Activated B cell treated with CpG ODN at 0.5 μM for 24 hours (primary cell): ENCODE measurements at regions of chr4 and their contacts with region 1.

Region 1: DNA sequence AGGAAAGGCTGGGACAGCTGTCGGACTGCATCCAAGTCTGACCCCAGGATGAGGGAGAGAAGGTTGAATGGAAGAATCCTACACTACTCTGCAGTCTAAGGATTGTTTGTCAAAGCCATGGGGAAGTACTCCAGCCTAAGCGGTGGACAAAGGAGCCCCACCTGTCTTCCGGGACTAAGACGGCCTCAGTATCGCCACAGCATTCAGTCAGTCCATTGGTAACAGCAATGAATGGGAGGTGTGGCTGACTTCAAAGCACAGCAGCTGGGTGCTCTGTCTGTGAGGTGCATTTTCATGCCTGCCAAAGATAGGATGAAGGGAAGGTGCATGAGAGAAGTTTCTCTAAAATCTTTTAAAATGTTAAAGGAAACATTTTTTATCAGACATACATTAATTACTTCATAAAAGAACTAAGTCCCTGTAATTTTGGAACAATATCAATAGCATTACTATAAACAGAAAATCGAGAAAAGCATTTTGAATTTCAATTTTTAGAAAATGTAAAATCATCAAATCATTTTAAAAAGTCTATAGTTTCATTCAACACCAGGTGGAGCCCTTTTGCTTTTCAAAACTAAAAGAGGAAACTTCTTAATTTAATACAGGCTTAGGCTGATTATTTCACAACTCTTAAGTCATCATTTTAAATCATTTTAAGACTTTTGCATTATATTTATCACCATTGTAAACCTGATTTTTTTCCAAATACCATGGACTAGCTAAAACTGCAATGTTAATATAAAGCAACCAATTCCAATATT is 27.6 kb upstream of the INTU start:
- DNase-seq: no peak
- ATAC-seq: no peak
- H3K4me3 Mint-ChIP-seq: no peak overlapping the region
- H3K27ac Mint-ChIP-seq: no peak overlapping the region
- H3K4me1 Mint-ChIP-seq: no peaks in the 10 kb centered on the region
- H3K27me3 Mint-ChIP-seq: peaks cover 5% of the 10 kb centered on the region
- CTCF ChIP-seq: no peak

Region 2: GRCh38 chr4:127558489-127559407 is 46.4 kb before region 1 on chr4:
- CTCF ChIA-PET with region 1: no interaction called
- POLR2A ChIA-PET with region 1: no interaction called
- intact Hi-C with region 1: no loop called
- DNase-seq: no peak
- ATAC-seq: no peak
- H3K4me3 Mint-ChIP-seq: no peak overlapping the region
- H3K27ac Mint-ChIP-seq: no peak overlapping the region
- H3K4me1 Mint-ChIP-seq: no peaks in the 10 kb centered on the region
- H3K27me3 Mint-ChIP-seq: no peaks in the 10 kb centered on the region
- CTCF ChIP-seq: no peak

Region 3: DNA sequence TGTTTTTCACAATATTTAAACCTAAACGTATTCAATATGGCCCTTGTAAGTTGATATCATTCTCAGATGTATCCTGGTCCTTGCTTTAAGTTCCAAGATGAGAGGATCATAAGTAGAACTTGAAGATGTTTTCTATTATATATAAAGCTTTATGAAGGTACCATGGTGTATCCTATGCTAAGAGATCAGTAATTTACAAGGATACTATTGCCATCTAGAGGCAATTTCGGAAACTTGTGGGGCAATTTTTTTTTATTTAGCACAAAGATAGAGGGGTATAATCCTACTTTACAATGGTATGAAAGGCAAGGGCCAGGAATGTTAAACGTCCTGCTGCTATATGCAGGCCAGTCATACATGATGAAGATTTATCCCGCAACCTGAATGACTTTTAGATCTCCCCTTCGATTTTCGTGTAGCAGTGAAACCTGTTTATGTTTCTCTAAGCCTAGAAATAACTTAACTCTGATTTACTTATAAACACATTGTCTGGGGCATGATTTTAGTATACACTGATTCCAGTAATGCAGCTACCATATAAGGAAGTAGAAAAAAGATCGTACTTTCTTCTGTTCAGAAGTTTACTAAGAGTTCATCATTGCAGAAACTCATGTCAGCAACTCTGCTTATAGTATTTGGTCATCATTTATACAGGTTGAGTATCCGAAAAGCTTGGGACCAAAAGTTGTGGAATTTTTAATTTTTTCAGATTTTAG is 127.6 kb after region 1 on chr4:
- CTCF ChIA-PET with region 1: interaction called, 7 read pairs
- POLR2A ChIA-PET with region 1: no interaction called
- intact Hi-C with region 1: loop called (anchors 1 kb)
- DNase-seq: no peak
- ATAC-seq: no peak
- H3K4me3 Mint-ChIP-seq: no peak overlapping the region
- H3K27ac Mint-ChIP-seq: no peak overlapping the region
- H3K4me1 Mint-ChIP-seq: no peaks in the 10 kb centered on the region
- H3K27me3 Mint-ChIP-seq: no peaks in the 10 kb centered on the region
- CTCF ChIP-seq: no peak

Region 4: GRCh38 chr4:127788517-127788916 is 183.4 kb after region 1 on chr4:
- CTCF ChIA-PET with region 1: no interaction called
- POLR2A ChIA-PET with region 1: no interaction called
- intact Hi-C with region 1: loop called (anchors 1 kb)
- DNase-seq: no peak
- ATAC-seq: no peak
- H3K4me3 Mint-ChIP-seq: no peak overlapping the region
- H3K27ac Mint-ChIP-seq: no peak overlapping the region
- H3K4me1 Mint-ChIP-seq: no peaks in the 10 kb centered on the region
- H3K27me3 Mint-ChIP-seq: peaks cover 26% of the 10 kb centered on the region
- CTCF ChIP-seq: no peak

Region 5: DNA sequence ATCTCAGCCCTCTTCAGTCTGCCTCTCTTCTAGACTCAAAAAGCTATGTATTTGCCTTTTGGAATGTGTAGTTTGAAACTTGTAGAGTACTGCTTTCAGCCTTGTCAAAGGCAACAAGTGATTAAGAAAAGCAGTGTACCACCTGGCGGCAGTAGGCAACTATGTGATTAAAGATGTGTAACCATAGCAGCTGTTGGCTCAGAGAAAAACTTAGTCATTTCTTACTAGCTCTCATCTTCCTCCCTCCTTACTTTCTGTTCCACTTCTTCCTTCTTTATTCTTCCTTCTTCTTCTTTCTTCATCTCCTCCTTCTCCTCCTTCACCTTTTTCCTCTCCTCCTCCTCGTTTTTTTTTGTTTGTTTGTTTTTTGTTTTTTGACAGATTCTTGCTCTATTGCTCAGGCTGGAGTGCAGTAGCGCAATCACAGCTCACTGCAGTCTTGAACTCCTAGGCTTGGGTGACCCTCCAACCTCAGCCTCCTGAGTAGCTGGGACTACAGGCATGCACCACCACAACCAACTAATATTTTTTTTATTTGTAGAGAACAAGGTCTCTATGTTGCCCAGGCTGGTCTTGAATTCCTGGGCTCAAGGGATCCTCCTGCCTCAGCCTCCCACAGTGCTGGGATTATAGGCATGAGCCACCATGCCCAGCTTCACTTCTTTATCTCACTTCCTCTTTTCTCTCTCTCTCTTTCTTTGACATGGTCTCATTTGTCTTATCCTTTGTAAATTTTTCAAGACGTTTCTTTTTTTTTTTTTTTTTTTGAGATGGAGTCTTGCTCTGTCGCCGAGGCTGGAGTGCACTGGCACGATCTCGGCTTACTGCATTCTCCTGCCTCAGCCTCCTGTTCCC is 392.6 kb after region 1 on chr4:
- CTCF ChIA-PET with region 1: no interaction called
- POLR2A ChIA-PET with region 1: no interaction called
- intact Hi-C with region 1: loop called (anchors 1 kb)
- DNase-seq: no peak
- ATAC-seq: peak; percentile 92
- H3K4me3 Mint-ChIP-seq: peak overlapping the region; percentile 2
- H3K27ac Mint-ChIP-seq: peak overlapping the region; percentile 81
- H3K4me1 Mint-ChIP-seq: peaks cover 23% of the 10 kb centered on the region
- H3K27me3 Mint-ChIP-seq: no peaks in the 10 kb centered on the region
- CTCF ChIP-seq: no peak